Activated B cell treated with CpG ODN at 0.5 μM for 24 hours (primary cell): ENCODE measurements at regions of chr5 and their contacts with region 1.

Region 1: DNA sequence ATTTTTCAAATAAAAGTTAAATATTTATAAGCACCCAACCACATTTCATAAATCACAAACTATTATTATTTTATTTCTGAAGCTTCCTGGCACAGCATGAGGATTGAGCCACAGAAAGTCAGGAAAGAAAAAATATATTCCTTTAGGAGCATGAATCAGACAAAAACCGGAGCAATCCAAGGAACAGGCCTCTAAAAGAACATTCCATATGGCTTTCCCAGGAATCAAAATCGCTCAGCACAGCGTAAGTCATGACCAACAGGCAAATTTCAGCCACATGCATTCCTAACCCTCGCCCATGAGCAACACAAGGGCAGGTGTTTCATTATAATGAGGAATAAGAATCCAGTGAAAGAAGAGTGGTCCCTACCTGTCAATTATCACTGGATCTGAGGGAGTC is 26.7 kb downstream of the EBF1 start:
- DNase-seq: no peak
- ATAC-seq: no peak
- H3K4me3 Mint-ChIP-seq: no peak overlapping the region
- H3K27ac Mint-ChIP-seq: no peak overlapping the region
- H3K4me1 Mint-ChIP-seq: peaks cover 49% of the 10 kb centered on the region
- H3K27me3 Mint-ChIP-seq: no peaks in the 10 kb centered on the region
- CTCF ChIP-seq: no peak

Region 2: GRCh38 chr5:159061179-159061796 is 11.7 kb before region 1 on chr5:
- CTCF ChIA-PET with region 1: no interaction called
- POLR2A ChIA-PET with region 1: interaction called, 5 read pairs
- intact Hi-C with region 1: loop called (anchors 2 kb)
- DNase-seq: no peak
- ATAC-seq: no peak
- H3K4me3 Mint-ChIP-seq: no peak overlapping the region
- H3K27ac Mint-ChIP-seq: no peak overlapping the region
- H3K4me1 Mint-ChIP-seq: peaks cover 69% of the 10 kb centered on the region
- H3K27me3 Mint-ChIP-seq: no peaks in the 10 kb centered on the region
- CTCF ChIP-seq: no peak